K562 (cell line): ENCODE measurements at regions of chr5 and their contacts with region 1.

Region 1: GRCh38 chr5:90434116-90434714 is 24.7 kb upstream of the CETN3 start:
- DNase-seq: peak; percentile 29 to 77 (median 44)
- ATAC-seq: peak; percentile 98
- H3K4me3 ChIP-seq: no peak overlapping the region
- H3K27ac ChIP-seq: no peak overlapping the region
- H3K4me1 ChIP-seq: no peaks in the 10 kb centered on the region
- H3K27me3 ChIP-seq: no peaks in the 10 kb centered on the region
- CTCF ChIP-seq: peak; percentile 79 to 90 (median 87)
- EP300 ChIP-seq: no peak
- POLR2A ChIP-seq: no peak
- RAD21 ChIP-seq: peak; percentile 58 to 85

Region 2: DNA sequence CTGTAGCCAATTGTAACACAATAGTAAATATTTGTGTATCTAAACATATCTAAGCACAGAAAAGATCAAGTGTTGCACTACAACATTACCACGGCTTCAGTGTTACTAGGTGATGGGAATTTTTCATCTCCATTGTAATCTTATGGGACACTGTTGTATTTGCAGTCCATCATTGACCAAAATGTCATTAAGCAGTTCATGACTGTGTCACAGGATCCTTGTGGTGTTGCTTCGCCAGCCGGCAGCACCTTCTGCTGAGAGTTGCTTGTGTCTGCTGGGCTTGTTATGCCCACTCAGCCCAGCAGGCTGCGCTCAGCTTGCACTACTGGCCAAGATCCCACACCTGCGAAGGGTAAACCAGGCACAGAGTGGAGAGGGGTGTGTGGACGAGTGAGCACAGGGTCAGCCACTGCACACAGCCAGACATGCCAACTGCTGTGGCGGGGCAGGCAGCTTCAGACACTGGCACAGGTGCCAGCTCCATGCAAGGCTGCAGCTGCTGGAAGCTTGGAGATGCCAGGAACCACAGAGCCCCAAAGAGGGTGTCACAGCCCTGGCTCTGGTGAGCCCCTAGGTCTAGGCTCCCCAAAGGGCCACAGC is 298.3 kb before region 1 on chr5:
- CTCF ChIA-PET with region 1: no interaction called
- POLR2A ChIA-PET with region 1: no interaction called
- in situ Hi-C with region 1: no loop called
- intact Hi-C with region 1: loop called (anchors 5 kb)
- DNase-seq: peak; percentile 14 to 39 (median 16)
- ATAC-seq: peak; percentile 94
- H3K4me3 ChIP-seq: no peak overlapping the region
- H3K27ac ChIP-seq: no peak overlapping the region
- H3K4me1 ChIP-seq: no peaks in the 10 kb centered on the region; a peak in 1 of 5 replicates
- H3K27me3 ChIP-seq: no peaks in the 10 kb centered on the region
- CTCF ChIP-seq: peak; percentile 52 to 64 (median 53)
- EP300 ChIP-seq: no peak
- POLR2A ChIP-seq: no peak
- RAD21 ChIP-seq: peak; percentile 25 to 64; a peak in 3 of 4 replicates

Region 3: DNA sequence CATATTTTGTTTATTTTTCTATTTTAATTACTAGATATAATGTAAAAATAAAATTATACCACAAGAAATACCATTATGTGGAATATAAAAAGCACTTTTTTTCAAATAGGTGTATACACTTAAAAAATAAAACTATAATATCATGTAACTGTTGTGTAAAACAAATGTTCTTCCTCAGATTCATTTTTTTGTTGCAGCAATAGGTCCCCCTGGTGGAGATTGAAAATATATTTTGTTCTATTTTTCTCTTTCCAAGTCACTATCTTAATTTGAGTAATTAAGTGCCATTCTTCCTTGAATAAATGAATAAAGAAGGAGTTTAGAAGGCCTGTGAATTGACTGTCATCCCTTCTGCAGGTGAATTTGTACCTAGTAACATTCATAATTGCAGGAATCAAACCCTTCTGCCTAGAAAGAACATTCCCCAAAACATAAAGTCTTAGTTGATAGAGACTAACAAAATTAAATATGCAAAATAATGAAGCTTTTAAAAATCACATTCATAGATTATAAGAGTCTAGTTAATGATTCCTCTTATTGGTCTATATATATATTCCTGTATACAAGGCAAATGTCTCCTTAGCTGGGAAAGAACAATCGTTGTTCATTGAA is 48.0 kb before region 1 on chr5:
- CTCF ChIA-PET with region 1: no interaction called
- POLR2A ChIA-PET with region 1: no interaction called
- in situ Hi-C with region 1: no loop called
- intact Hi-C with region 1: loop called (anchors 5 kb)
- DNase-seq: peak in 1 of 4 experiments; percentile 29
- ATAC-seq: 0 out of 3 replicates have a peak, but pooled peaks have one; percentile 46
- H3K4me3 ChIP-seq: no peak overlapping the region
- H3K27ac ChIP-seq: no peak overlapping the region
- H3K4me1 ChIP-seq: no peaks in the 10 kb centered on the region
- H3K27me3 ChIP-seq: no peaks in the 10 kb centered on the region; a peak in 1 of 5 replicates
- CTCF ChIP-seq: peak in 2 of 3 experiments; percentile 17 to 67; a peak in 4 of 6 replicates
- EP300 ChIP-seq: no peak
- POLR2A ChIP-seq: no peak
- RAD21 ChIP-seq: peak; percentile 45 to 70; a peak in 3 of 4 replicates

Region 4: GRCh38 chr5:90529194-90529938 is 95.2 kb after region 1 on chr5 and contains the start of gene LYSMD3:
- CTCF ChIA-PET with region 1: interaction called, 22 read pairs
- POLR2A ChIA-PET with region 1: no interaction called
- in situ Hi-C with region 1: no loop called
- intact Hi-C with region 1: loop called (anchors 1 kb)
- DNase-seq: peak; percentile 98 to 99 (median 98)
- ATAC-seq: peak; percentile 94
- H3K4me3 ChIP-seq: peak within 1 kb of the TSS; percentile 76
- H3K27ac ChIP-seq: peak within 1 kb of the TSS; percentile 92
- H3K4me1 ChIP-seq: peaks cover 4 to 18% of the 10 kb centered on the region in 2 experiments; a peak in 4 of 5 replicates
- H3K27me3 ChIP-seq: no peaks in the 10 kb centered on the region
- CTCF ChIP-seq: no peak
- EP300 ChIP-seq: no peak
- POLR2A ChIP-seq: peak; percentile 89
- RAD21 ChIP-seq: no peak
- polyA plus RNA-seq, gene LYSMD3: 9.5 to 19.2 TPM

Region 5: GRCh38 chr5:90783460-90784333 is 349.5 kb after region 1 on chr5:
- CTCF ChIA-PET with region 1: interaction called, 4 read pairs
- POLR2A ChIA-PET with region 1: no interaction called
- in situ Hi-C with region 1: no loop called
- intact Hi-C with region 1: loop called (anchors 1 kb)
- DNase-seq: peak; percentile 52 to 81 (median 60)
- ATAC-seq: peak; percentile 96
- H3K4me3 ChIP-seq: no peak overlapping the region
- H3K27ac ChIP-seq: no peak overlapping the region
- H3K4me1 ChIP-seq: no peaks in the 10 kb centered on the region
- H3K27me3 ChIP-seq: no peaks in the 10 kb centered on the region
- CTCF ChIP-seq: peak; percentile 73 to 95 (median 85)
- EP300 ChIP-seq: no peak
- POLR2A ChIP-seq: no peak
- RAD21 ChIP-seq: peak; percentile 77 to 84